ENCODE measurements at regions of chr19 and their contacts with region 1.

Region 1: DNA sequence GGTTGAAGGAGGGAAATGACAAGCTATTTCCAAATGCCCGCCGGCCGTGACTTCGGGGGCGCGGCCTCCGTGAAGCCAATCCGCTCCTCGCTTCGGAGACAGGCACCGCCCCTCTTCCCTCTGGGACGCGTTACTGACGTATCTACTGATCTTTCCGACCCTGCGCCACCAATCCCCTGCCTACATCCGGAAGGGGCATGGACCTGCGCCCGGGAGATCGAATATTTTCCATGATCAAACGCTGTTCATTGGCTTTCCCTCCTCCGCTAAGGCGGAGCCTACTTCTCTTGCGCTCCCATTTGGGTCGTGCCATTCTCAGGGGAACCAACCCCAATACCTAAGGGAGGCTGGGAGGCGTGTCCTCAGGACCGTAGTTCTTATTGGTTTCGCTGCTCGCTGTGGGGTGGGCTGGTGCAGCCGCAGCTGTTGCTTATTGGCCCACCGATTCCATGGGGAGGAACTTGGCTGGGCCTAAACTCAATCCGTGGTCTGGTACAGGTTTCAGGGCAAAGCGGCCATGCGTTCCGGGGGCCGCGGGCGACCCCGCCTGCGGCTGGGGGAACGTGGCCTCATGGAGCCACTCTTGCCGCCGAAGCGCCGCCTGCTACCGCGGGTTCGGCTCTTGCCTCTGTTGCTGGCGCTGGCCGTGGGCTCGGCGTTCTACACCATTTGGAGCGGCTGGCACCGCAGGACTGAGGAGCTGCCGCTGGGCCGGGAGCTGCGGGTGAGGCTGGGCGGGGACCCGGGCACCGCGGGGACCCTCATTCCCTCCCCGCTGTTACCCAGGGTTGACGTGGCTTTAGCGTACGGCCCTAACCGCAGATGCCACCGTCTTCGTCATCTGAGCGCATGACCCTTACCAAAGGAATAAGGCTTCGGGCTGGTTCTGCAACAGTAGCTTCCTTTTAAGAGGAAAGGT is at the start of gene QPCTL:
- DNase-seq: peak; percentile 99 to 100
- ATAC-seq: peak; percentile 91 to 96
- H3K4me3 ChIP-seq: peak within 1 kb of the TSS; percentile 82
- H3K27ac ChIP-seq: peak within 1 kb of the TSS; percentile 88 to 91
- H3K4me1 ChIP-seq: peaks cover 13% of the 10 kb centered on the region
- CTCF ChIP-seq: no peak
- EP300 ChIP-seq: no peak
- POLR2A ChIP-seq: peak; percentile 93
- RAD21 ChIP-seq: no peak
- polyA plus RNA-seq, gene QPCTL: 9.4 and 10.3 TPM in 2 replicates

Region 2: DNA sequence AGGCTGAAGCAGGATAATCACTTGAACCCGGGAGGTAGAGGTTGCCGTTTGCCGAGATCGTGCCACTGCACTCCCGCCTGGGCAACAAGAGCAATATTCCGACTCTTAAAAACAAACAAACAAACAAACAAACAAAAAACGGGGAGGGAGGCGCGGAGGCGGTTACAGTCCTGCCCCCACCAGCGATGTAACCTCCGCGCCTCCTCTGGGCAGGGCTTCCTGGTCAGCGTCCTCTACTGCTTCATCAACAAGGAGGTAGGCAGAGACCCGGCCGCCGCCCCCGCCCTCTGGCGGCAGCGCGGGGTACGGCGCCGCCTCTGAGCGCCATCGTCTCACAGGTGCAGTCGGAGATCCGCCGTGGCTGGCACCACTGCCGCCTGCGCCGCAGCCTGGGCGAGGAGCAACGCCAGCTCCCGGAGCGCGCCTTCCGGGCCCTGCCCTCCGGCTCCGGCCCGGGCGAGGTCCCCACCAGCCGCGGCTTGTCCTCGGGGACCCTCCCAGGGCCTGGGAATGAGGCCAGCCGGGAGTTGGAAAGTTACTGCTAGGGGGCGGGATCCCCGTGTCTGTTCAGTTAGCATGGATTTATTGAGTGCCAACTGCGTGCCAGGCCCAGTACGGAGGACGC is 10.9 kb before region 1 on chr19:
- CTCF ChIA-PET with region 1: interaction called, 159 read pairs
- POLR2A ChIA-PET with region 1: interaction called, 30 read pairs
- DNase-seq: peak; percentile 92 to 93
- ATAC-seq: peak; percentile 84 to 86
- H3K4me3 ChIP-seq: peak overlapping the region; percentile 38
- H3K27ac ChIP-seq: peak overlapping the region; percentile 67 to 87
- H3K4me1 ChIP-seq: peaks cover 12% of the 10 kb centered on the region
- CTCF ChIP-seq: peak; percentile 98
- EP300 ChIP-seq: no peak
- POLR2A ChIP-seq: no peak; the same call in 1 of the 2 replicates
- RAD21 ChIP-seq: peak; percentile 70 to 83

Region 3: GRCh38 chr19:45711851-45712698 is 19.6 kb after region 1 on chr19:
- CTCF ChIA-PET with region 1: interaction called, 160 read pairs
- POLR2A ChIA-PET with region 1: interaction called, 40 read pairs
- DNase-seq: no peak
- ATAC-seq: no peak
- H3K4me3 ChIP-seq: no peak overlapping the region
- H3K27ac ChIP-seq: no peak overlapping the region
- H3K4me1 ChIP-seq: peaks cover 17% of the 10 kb centered on the region
- CTCF ChIP-seq: no peak
- EP300 ChIP-seq: no peak
- POLR2A ChIP-seq: no peak
- RAD21 ChIP-seq: no peak

Region 4: GRCh38 chr19:45730389-45731288 is 38.2 kb after region 1 on chr19 and contains the start of gene FBXO46:
- CTCF ChIA-PET with region 1: interaction called, 26 read pairs
- POLR2A ChIA-PET with region 1: interaction called, 18 read pairs
- DNase-seq: peak; percentile 98 to 99
- ATAC-seq: peak; percentile 98 to 99
- H3K4me3 ChIP-seq: peak within 1 kb of the TSS; percentile 89
- H3K27ac ChIP-seq: peak within 1 kb of the TSS; percentile 92 to 95
- H3K4me1 ChIP-seq: peaks cover 24% of the 10 kb centered on the region
- CTCF ChIP-seq: no peak
- EP300 ChIP-seq: no peak
- POLR2A ChIP-seq: peak; percentile 75
- RAD21 ChIP-seq: peak; percentile 14 to 23; a peak in 2 of 5 replicates
- polyA plus RNA-seq, gene FBXO46: 4.9 and 6.9 TPM in 2 replicates

Region 5: DNA sequence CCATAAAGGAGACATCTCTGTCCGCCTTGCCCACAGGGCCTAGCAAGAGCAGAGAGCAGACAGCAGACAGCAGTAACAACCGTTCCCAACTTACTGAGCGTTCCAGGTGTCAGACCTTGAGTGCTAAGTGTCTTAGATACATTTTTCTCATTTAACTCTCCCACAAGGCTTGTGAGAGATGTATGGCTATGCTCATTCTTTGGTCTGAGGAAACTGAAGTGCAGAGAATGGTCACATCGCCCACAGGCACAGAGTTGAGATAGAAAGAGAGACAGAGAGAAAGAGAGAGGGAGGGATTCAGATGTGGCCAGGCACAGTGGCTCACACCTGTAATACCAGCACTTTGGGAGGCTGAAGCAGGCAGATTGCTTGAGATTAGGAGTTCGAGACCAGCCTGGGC is 55.1 kb after region 1 on chr19:
- CTCF ChIA-PET with region 1: interaction called, 21 read pairs
- POLR2A ChIA-PET with region 1: interaction called, 3 read pairs
- DNase-seq: no peak
- ATAC-seq: no peak; a peak in 1 of 6 replicates
- H3K4me3 ChIP-seq: no peak overlapping the region
- H3K27ac ChIP-seq: no peak overlapping the region
- H3K4me1 ChIP-seq: 0 out of 3 replicates have a peak, but pooled peaks cover under 1% of the 10 kb centered on the region
- CTCF ChIP-seq: no peak
- EP300 ChIP-seq: no peak
- POLR2A ChIP-seq: no peak
- RAD21 ChIP-seq: no peak

Region 6: GRCh38 chr19:45770192-45771101 is 78.0 kb after region 1 on chr19:
- CTCF ChIA-PET with region 1: interaction called, 121 read pairs
- POLR2A ChIA-PET with region 1: interaction called, 68 read pairs
- DNase-seq: peak; percentile 99 to 100
- ATAC-seq: peak; percentile 49 to 83
- H3K4me3 ChIP-seq: peak overlapping the region; percentile 45
- H3K27ac ChIP-seq: peak overlapping the region; percentile 71 to 87
- H3K4me1 ChIP-seq: peaks cover 18% of the 10 kb centered on the region
- CTCF ChIP-seq: peak; percentile 96
- EP300 ChIP-seq: no peak
- POLR2A ChIP-seq: peak; percentile 32
- RAD21 ChIP-seq: peak; percentile 78 to 92

Measured in A549 (cell line).